ENCODE measurements at regions of chr1 and their contacts with region 1.

Region 1: DNA sequence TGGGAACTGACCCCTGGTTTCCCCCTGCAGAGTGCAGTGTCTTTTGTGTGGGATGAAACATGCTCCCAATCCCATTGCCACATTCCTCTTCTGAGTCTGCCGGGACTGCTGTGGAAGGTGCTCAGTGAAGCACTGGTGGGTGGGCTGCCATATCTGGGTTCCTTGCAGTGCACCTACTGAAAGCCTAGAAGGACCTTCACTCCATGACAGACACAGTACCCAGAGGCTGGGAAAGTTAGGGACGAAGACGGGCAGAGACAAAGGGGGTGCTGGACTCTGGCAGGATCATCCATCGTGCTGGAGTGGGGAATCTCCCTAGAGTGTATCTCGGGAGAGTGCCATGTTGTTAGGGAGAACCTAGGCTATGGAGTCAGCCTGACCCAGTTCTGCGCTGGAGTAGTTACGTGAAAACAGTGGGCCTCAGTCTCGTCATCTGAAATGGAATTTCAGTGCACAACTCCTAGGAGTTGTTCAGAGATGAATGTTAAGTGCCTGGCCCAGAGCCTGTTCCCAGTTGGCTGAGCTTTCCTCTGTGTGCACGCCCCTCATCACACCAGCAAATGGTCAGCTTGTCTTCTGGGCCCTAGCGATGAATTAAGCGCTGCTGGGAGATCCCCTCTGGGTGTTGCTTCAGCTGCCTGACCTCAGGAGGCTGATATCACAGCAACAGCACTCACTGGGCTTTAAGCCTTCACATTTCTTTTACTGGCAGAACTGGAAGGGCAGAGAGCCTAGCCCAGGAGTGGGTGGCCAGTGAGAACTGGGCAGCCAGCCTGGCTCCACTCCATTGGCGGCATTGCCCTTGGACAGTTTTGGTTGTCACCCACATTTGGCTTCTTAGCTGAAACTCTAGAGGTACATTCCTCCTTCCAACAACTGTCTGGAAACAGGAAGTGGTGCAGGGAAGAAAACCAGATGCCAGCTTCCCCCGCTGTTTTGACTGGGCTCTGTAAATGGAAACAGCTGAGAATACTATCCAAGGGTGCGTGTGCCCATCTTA is 479.8 kb upstream of the VAMP3 start:
- DNase-seq: peak; percentile 68 to 83 (median 75)
- ATAC-seq: peak; percentile 89 to 95 (median 92)
- H3K4me3 ChIP-seq: no peak overlapping the region
- H3K27ac ChIP-seq: peak overlapping the region; percentile 0 to 85 (median 65)
- H3K4me1 ChIP-seq: peaks cover 0 to 27% (median 10%) of the 10 kb centered on the region in 12 donors
- H3K27me3 ChIP-seq: no peaks in the 10 kb centered on the region
- CTCF ChIP-seq: no peak
- POLR2A ChIP-seq: no peak

Region 2: GRCh38 chr1:7516341-7516740 is 225.1 kb after region 1 on chr1:
- intact Hi-C with region 1: loop called in 2 of 10 experiments (anchors 5 to 10 kb)
- DNase-seq: peak in 4 of 5 donors; percentile 30 to 59 (median 39)
- ATAC-seq: peak; percentile 30 to 75 (median 47)
- H3K4me3 ChIP-seq: no peak overlapping the region
- H3K27ac ChIP-seq: peak overlapping the region in 1 of 12 donors; percentile 36
- H3K4me1 ChIP-seq: peaks cover 0 to 28% (median 6%) of the 10 kb centered on the region in 12 donors
- H3K27me3 ChIP-seq: no peaks in the 10 kb centered on the region
- CTCF ChIP-seq: peak in 4 of 12 donors; percentile 10 to 28 (median 20)
- POLR2A ChIP-seq: no peak